HAP-1 (cell line): ENCODE measurements at regions of chr6 and their contacts with region 1.

Region 1: DNA sequence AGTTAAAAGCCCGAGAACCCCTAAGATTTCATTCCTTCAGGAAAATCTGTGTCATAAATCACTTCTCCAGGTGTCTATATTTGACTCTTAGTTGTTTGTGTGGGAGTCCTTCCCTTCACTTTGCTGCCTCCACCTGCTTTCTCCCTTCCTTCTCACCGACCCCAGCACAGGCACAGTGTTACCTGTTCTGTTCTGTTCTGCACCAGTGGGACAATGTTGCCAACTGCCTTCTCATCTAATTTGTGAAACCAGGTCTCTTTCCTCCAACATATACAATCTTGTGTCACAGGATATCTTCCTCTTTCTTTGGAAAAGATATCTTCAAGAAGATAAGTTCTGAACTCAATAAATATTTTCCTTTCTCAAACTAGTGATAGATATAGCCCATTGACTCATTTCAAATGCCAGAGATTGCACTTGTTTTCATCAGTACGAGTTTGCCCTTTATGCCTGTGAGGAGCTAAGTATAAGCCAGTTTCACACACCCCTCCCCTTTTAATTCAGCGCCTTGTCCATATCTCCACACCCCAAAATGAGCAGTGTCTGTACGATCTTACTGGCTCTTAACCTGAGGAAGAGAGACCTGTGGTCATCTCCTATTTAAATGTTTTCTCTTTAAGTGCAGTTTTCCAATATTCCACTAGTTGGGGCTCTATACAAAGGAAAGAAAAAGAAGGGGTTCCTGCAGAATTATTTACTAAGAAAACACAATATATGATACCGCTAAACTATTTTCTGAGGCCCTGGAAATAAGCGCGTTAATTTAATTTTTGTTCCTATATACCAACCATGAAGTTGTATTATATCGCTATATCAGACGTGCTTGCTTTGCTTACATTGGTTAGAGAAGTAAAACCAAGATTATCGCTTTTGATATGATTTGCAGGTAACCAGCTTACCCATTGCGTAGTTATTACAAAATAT is 81.6 kb upstream of the PREP start:
- DNase-seq: peak in 1 of 2 experiments; percentile 61
- H3K4me3 ChIP-seq: no peak overlapping the region
- H3K4me1 ChIP-seq: peaks cover 52% of the 10 kb centered on the region
- H3K27me3 ChIP-seq: no peaks in the 10 kb centered on the region

Region 2: DNA sequence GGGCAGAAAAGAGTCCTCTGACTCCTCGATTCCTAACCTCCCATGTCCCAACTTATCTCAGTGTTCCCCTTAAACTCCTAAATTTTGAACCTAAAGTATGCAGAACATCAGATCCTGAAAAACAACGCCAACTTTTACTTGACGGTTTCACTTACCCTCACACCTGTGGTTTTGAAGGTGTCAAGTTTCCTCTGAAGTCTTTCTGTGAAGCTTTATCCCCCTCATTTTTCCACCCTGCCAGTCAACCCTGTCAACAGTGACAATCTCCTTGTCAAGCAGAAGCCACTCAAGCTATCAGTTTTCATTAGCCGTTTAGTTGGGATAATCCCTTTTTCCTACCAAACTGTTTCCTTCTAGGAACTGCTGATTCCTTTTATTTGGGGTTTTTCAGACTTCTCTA is 163.8 kb after region 1 on chr6:
- in situ Hi-C with region 1: no loop called
- DNase-seq: no peak
- H3K4me3 ChIP-seq: no peak overlapping the region
- H3K4me1 ChIP-seq: peaks cover 7% of the 10 kb centered on the region
- H3K27me3 ChIP-seq: no peaks in the 10 kb centered on the region

Region 3: DNA sequence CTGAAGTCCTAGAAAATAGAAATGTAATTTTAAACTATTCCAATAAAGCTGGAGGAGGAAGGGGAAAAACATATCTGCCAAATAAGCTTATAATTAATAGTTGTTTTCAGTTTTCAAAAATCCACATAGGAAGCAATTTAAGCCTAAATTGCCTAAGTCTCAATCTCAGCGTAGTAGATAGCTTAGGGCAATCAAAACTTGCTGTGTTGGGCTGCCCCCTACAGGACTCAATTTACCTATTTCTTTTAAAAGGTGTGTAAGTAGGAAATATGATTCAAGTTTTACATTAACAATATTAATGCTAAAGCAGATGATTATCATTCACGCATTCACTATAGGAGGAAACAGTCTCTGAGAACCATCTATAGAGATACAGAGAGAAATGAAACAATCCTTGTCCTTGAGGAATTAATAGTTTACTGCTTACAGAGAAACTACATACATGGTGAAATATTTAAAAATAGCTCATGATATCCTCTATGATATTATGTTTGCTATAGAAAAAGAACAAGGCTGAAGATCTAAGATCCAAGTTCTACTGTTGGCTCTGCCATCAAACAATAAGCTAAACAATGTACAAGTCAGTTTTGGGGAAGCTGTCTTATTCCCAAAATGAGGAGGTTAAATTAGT is 738.9 kb after region 1 on chr6:
- in situ Hi-C with region 1: loop called (anchors 25 kb)
- DNase-seq: peak; percentile 63 to 75
- H3K4me3 ChIP-seq: no peak overlapping the region
- H3K4me1 ChIP-seq: no peaks in the 10 kb centered on the region
- H3K27me3 ChIP-seq: no peaks in the 10 kb centered on the region